A549 (cell line): ENCODE measurements at regions of chr17 and their contacts with region 1.

Region 1: DNA sequence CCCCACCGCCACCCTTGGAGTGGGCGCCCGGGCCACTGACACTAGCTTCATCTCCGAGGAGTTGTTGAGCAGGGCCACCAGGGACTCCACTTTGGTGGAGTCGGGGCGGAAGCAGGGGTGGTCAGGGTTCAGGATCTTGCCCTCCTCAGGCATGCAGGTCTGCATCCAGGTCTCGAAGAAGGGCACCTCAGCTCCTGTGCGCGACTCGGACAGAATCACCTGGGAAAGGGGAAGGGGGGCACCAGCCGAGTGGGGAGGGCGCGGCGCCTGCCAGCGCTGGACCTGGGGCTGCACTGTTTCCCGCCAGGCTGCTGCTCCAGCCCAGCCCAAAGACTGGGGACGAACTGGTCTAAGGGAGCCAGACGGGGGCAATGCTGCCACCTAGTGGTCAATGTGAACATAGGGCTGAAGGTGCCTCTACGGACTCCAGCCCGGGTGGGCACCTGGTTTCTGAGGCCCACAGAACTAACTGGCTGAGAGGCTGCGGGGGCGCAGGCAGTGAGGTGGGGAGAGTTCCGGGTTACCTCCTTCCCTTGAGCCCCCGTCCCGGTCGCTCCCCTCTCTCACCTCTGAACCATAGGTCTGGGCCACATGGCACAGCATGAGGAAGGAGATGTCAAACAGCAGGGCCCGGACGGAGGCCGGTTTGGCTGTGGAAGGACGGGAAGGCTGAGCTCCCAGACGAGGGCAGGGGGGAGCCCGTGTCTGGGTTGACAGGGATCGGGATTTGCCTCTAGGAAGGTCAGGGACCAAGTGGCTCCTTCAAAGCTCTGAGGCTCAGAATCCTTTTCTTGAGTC is 11.8 kb downstream of the CSF3 start:
- DNase-seq: peak; percentile 83 to 93
- ATAC-seq: peak; percentile 84 to 97
- H3K4me3 ChIP-seq: no peak overlapping the region
- H3K27ac ChIP-seq: peak overlapping the region; percentile 30 to 56; a peak in 4 of 6 replicates
- H3K4me1 ChIP-seq: peaks cover 23% of the 10 kb centered on the region
- CTCF ChIP-seq: peak; percentile 96
- EP300 ChIP-seq: no peak
- POLR2A ChIP-seq: no peak
- RAD21 ChIP-seq: peak; percentile 77 to 79

Region 2: GRCh38 chr17:39916918-39917317 is 110.1 kb before region 1 on chr17:
- CTCF ChIA-PET with region 1: no interaction called
- POLR2A ChIA-PET with region 1: no interaction called
- DNase-seq: peak in 1 of 2 experiments; percentile 42
- ATAC-seq: peak; percentile 50 to 68; a peak in 4 of 6 replicates
- H3K4me3 ChIP-seq: no peak overlapping the region
- H3K27ac ChIP-seq: no peak overlapping the region
- H3K4me1 ChIP-seq: no peaks in the 10 kb centered on the region
- CTCF ChIP-seq: no peak
- EP300 ChIP-seq: no peak
- POLR2A ChIP-seq: no peak
- RAD21 ChIP-seq: no peak

Region 3: GRCh38 chr17:40062329-40063186 is 35.5 kb after region 1 on chr17 and contains the start of gene THRA:
- CTCF ChIA-PET with region 1: interaction called, 40 read pairs
- POLR2A ChIA-PET with region 1: no interaction called
- DNase-seq: peak in 1 of 2 experiments; percentile 68
- ATAC-seq: peak; percentile 65 to 70
- H3K4me3 ChIP-seq: peak within 1 kb of the TSS; percentile 98
- H3K27ac ChIP-seq: peak within 1 kb of the TSS; percentile 92 to 98
- H3K4me1 ChIP-seq: peaks cover 33% of the 10 kb centered on the region
- CTCF ChIP-seq: peak; percentile 86
- EP300 ChIP-seq: no peak
- POLR2A ChIP-seq: no peak
- RAD21 ChIP-seq: no peak; a peak in 3 of 5 replicates
- polyA plus RNA-seq, gene THRA: 20.1 and 27.4 TPM in 2 replicates

Region 4: DNA sequence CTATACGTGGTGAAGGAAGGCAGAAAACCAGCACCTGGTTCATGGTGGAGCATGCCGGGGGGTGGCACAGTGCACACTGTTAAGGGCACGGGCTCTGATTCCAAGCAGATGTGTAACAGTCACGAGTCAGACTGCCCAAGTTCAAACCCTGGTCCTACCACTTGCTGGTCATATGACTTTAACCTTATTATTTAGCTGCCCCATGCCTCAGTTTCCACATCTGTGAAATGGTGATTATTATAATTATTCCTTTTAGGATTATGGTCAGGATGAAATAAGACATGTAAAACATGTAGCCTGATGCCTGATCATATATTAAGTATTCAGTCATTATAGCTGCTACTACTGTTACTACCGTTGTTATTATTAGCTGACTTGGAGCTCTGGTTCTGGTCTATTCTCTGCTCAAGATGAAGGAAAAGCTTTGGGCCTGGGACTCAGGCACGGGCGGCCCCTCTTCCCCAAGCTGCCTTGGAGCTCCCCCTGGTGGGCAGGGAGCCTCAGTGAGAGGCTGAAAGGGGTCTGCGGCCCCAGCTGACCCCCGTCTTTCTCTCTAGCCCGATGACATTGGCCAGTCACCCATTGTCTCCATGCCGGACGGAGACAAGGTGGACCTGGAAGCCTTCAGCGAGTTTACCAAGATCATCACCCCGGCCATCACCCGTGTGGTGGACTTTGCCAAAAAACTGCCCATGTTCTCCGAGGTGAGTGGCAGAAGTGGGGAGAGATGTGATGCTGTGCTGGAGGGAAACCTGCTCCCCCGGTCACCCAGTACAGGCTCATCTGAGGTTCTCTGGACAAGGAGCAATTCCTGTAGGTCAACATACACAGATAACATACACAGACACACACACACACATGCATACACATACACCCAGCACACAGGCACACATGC is 59.4 kb after region 1 on chr17:
- CTCF ChIA-PET with region 1: interaction called, 103 read pairs
- POLR2A ChIA-PET with region 1: no interaction called
- DNase-seq: peak; percentile 70 to 85
- ATAC-seq: peak; percentile 52 to 84; a peak in 4 of 6 replicates
- H3K4me3 ChIP-seq: no peak overlapping the region
- H3K27ac ChIP-seq: no peak overlapping the region
- H3K4me1 ChIP-seq: peaks cover 15% of the 10 kb centered on the region
- CTCF ChIP-seq: peak; percentile 95
- EP300 ChIP-seq: no peak
- POLR2A ChIP-seq: no peak
- RAD21 ChIP-seq: peak; percentile 97

Region 5: DNA sequence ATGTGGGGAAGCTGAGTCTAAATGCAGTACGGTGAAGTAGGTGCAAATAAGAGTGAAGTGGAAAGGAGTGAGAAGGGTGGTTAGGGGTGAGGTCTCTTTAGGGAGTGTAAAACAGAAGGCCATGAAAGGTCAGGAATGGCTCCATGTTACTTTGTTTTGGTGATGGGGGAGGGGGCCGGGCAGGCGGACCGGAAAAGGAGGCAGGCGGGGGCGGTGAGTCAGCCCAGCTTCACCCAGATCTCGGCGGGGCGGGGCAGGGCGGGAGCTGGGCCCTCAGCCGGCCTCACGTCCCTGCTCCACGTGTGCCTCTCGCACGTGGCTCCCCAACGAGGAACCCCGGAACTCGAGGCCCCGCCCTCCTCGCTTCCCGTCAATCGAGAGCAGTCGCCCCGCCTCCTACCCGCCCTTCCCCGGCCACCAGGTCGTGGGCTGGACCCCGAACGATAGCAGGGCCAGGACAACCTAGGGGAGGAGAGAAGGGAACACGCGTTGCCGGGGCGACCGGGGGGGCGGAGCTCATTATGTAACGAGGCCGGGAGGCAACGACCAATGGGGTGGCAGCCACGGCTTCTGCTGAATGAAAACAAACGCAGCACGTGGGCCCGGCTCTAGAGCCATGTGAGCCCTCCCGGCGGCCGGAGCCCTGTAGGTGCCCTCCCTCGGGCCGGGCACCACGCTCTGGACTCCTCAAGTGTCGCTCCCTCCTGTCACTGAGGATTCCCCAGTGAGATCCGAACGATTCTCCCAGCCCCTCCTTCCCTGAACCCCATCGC is 72.0 kb after region 1 on chr17:
- CTCF ChIA-PET with region 1: interaction called, 14 read pairs
- POLR2A ChIA-PET with region 1: interaction called, 6 read pairs
- DNase-seq: peak; percentile 99
- ATAC-seq: peak; percentile 58 to 66
- H3K4me3 ChIP-seq: peak overlapping the region; percentile 54
- H3K27ac ChIP-seq: peak overlapping the region; percentile 89
- H3K4me1 ChIP-seq: peaks cover 53% of the 10 kb centered on the region
- CTCF ChIP-seq: no peak
- EP300 ChIP-seq: peak in 1 of 2 experiments; percentile 53; a peak in 1 of 5 replicates
- POLR2A ChIP-seq: no peak
- RAD21 ChIP-seq: no peak; a peak in 1 of 5 replicates

Region 6: GRCh38 chr17:40139566-40140058 is 112.6 kb after region 1 on chr17:
- CTCF ChIA-PET with region 1: interaction called, 10 read pairs
- POLR2A ChIA-PET with region 1: no interaction called
- DNase-seq: no peak
- ATAC-seq: peak; percentile 13 to 36
- H3K4me3 ChIP-seq: peak overlapping the region; percentile 58
- H3K27ac ChIP-seq: peak overlapping the region; percentile 91 to 98
- H3K4me1 ChIP-seq: peaks cover 16% of the 10 kb centered on the region; the same call in 2 of the 3 replicates
- CTCF ChIP-seq: no peak
- EP300 ChIP-seq: no peak
- POLR2A ChIP-seq: no peak
- RAD21 ChIP-seq: no peak